ENCODE measurements at regions of chr13 and their contacts with region 1.

Region 1: GRCh38 chr13:20002787-20003186 is 44.3 kb downstream of the ZMYM2 start:
- DNase-seq: no peak
- ATAC-seq: no peak
- H3K4me3 Mint-ChIP-seq: no peak overlapping the region
- H3K27ac Mint-ChIP-seq: no peak overlapping the region
- H3K4me1 Mint-ChIP-seq: peaks cover 7% of the 10 kb centered on the region
- H3K27me3 Mint-ChIP-seq: no peaks in the 10 kb centered on the region

Region 2: DNA sequence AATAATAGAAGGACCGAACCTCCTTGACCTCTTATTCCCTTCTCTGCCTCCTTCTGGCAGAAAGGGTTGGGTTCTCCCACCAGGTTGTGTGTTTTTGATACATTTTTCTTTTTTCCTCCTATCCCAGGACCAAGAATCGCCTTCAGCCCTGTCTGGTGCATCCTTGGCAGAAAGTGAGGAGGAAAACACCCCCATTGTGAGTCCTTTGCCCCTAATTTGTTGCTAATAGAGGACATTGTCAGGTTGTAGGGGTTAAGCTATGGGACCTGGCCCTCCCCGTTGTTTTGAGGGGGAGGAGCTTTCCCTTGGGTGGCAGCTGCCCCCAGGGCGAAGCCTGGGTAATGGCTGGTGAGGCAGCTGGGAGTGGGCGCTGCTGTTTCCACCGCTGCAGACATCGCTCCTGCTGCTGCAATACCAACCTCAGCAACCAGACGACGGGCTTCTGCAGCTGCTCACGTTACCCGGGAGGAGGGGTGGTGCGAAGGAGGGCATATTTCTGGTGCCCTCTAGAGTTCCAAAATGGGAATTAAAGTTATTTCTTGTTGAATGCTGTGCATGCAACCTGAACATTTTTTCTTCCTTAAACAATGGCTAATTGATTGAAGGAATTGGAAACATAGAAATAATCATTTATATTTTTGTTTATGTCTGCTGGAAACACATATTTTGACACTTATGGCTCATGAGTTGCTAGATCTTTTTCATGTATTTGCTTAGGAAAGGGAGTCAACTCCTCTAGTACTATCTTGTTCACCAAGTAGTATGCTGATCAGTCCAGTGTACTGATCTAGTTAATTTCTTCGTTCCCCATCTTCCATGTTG is 42.7 kb before region 1 on chr13:
- CTCF ChIA-PET with region 1: no interaction called
- DNase-seq: peak; percentile 93
- ATAC-seq: peak; percentile 37
- H3K4me3 Mint-ChIP-seq: peak overlapping the region; percentile 95
- H3K27ac Mint-ChIP-seq: peak overlapping the region; percentile 95
- H3K4me1 Mint-ChIP-seq: peaks cover 27% of the 10 kb centered on the region
- H3K27me3 Mint-ChIP-seq: peaks cover 7% of the 10 kb centered on the region

Region 3: GRCh38 chr13:19984430-19985218 is 18.2 kb before region 1 on chr13:
- CTCF ChIA-PET with region 1: interaction called, 26 read pairs
- DNase-seq: no peak
- ATAC-seq: peak; percentile 68
- H3K4me3 Mint-ChIP-seq: no peak overlapping the region
- H3K27ac Mint-ChIP-seq: peak overlapping the region; percentile 73
- H3K4me1 Mint-ChIP-seq: peaks cover 32% of the 10 kb centered on the region
- H3K27me3 Mint-ChIP-seq: no peaks in the 10 kb centered on the region

Region 4: DNA sequence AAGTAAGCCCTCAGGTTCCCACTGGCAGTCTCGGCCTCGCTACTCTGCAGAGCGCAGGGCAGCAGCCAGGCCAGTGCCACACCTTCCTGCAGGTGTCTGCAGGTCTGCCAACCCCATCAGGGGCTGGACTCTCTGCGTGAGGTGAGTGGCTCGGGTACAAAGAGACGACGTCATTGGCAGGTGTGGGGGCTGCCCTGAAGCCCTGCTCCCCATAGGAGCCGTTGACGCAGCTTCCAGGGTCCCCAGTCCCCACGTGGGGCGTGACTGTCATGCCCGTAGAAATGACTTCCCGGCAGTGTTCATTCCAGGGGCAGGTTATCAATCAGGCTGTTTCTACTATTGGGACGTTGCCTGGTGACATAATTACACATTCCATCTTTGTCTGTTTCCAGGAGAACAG is 244.6 kb after region 1 on chr13:
- CTCF ChIA-PET with region 1: no interaction called
- DNase-seq: no peak
- ATAC-seq: no peak
- H3K4me3 Mint-ChIP-seq: no peak overlapping the region
- H3K27ac Mint-ChIP-seq: no peak overlapping the region
- H3K4me1 Mint-ChIP-seq: no peaks in the 10 kb centered on the region
- H3K27me3 Mint-ChIP-seq: peaks cover 21% of the 10 kb centered on the region

Measured in activated CD8-positive, alpha-beta memory T cell treated with anti-CD3 and anti-CD28 coated beads, Interleukin-2, amount 10 ng/mL, durations not matched to agents 7 days and 5 days (primary cell).